GM10248 (cell line): ENCODE measurements at regions of chr20 and their contacts with region 1.

Region 1: GRCh38 chr20:956330-956951 is 40.3 kb upstream of the ANGPT4 start:
- DNase-seq: peak; percentile 80
- CTCF ChIP-seq: peak; percentile 98

Region 2: GRCh38 chr20:815914-816606 is 140.4 kb before region 1 on chr20:
- CTCF ChIA-PET with region 1: interaction called, 231 read pairs
- POLR2A ChIA-PET with region 1: no interaction called
- DNase-seq: peak; percentile 77
- CTCF ChIP-seq: peak; percentile 89

Region 3: DNA sequence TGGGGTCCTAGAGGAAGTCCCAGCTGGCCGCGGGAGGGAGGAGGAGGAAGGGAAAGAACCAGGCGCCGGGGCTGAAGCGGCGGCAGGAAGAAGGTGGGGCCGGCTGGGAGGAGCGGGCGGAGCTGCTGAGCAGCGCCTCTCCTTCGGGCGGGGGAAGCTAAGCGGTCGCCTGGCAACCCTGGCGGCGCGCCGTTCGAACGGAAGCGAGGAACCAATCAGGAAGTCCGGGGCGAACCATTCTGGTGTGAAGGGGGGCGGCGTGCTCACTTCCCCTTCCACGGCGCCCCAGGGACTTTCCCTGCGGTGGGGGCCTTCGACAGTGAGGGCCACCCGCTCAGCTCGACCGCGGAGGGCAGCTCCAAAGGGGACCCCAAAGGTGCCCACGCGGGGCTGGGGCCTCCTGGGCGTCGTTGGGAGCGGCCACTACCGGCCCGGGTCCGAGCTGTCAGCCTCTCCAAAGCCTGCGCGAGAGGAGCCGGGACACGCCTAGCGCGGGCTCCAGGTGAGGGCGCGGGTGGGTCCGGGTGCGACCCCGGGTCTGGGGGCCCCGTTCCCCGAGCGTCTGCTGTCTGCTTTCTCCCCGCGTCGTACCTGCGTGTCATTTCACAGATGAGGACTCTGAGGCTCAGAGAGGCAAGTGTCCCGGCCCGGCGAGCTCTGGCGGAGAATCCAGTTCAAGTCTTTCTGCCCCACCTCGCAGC is 122.8 kb before region 1 on chr20 and contains the start of gene FAM110A:
- CTCF ChIA-PET with region 1: interaction called, 29 read pairs
- POLR2A ChIA-PET with region 1: interaction called, 3 read pairs
- DNase-seq: peak; percentile 96
- CTCF ChIP-seq: no peak

Region 4: DNA sequence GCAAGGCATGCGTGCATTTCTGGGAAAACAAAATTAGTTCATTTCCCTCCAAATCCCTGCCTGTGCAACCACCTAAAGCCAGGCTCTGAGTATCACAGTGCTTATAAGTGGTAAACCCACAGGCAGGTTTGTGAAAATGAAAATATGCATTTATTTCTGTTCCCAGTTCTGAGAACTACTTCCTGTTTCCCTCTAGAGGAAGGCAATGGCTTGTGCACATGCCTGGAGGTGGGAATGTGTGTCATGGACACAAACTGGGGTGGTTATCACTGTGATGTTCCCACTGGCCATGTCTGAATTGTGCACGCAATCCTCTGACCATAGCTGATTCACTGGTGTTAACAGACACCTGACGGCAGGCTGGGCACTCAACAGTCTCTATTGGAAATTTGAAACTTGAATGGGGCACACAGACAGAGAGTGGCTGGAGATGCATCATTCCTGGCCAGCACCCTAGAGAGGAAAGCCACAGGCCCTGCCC is 96.7 kb before region 1 on chr20:
- CTCF ChIA-PET with region 1: interaction called, 13 read pairs
- POLR2A ChIA-PET with region 1: no interaction called
- DNase-seq: no peak
- CTCF ChIP-seq: no peak

Region 5: GRCh38 chr20:967796-968742 is 11.6 kb after region 1 on chr20:
- CTCF ChIA-PET with region 1: interaction called, 63 read pairs
- POLR2A ChIA-PET with region 1: no interaction called
- DNase-seq: no peak
- CTCF ChIP-seq: no peak

Region 6: GRCh38 chr20:982754-983153 is 26.3 kb after region 1 on chr20:
- CTCF ChIA-PET with region 1: interaction called, 10 read pairs
- POLR2A ChIA-PET with region 1: no interaction called
- DNase-seq: no peak
- CTCF ChIP-seq: no peak